OCI-LY7 (cell line): ENCODE measurements at regions of chrX and their contacts with region 1.

Region 1: GRCh38 chrX:70433848-70434351 is 10.7 kb upstream of the DLG3 start:
- DNase-seq: peak; percentile 78
- H3K4me3 ChIP-seq: peak overlapping the region; percentile 77
- H3K27ac ChIP-seq: peak overlapping the region; percentile 40
- H3K4me1 ChIP-seq: peaks cover 7% of the 10 kb centered on the region
- CTCF ChIP-seq: peak; percentile 70

Region 2: GRCh38 chrX:70196961-70197805 is 236.7 kb before region 1 on chrX:
- CTCF ChIA-PET with region 1: no interaction called
- POLR2A ChIA-PET with region 1: no interaction called
- intact Hi-C with region 1: loop called (anchors 5 kb)
- DNase-seq: peak; percentile 63
- H3K4me3 ChIP-seq: no peak overlapping the region
- H3K27ac ChIP-seq: no peak overlapping the region
- H3K4me1 ChIP-seq: no peaks in the 10 kb centered on the region
- CTCF ChIP-seq: peak; percentile 75